Natural killer cell (primary cell): ENCODE measurements at regions of chr21 and their contacts with region 1.

Region 1: GRCh38 chr21:33199516-33200217 is 30.1 kb upstream of the IFNAR2 start:
- DNase-seq: peak; percentile 60 to 94
- ATAC-seq: peak; percentile 75 to 91 (median 83)
- H3K4me3 ChIP-seq: no peak overlapping the region
- H3K4me3 Mint-ChIP-seq: no peak overlapping the region
- H3K27ac ChIP-seq: no peak overlapping the region
- H3K27ac Mint-ChIP-seq: peak overlapping the region in 1 of 2 donors; percentile 60
- H3K4me1 ChIP-seq: peaks cover 30% of the 10 kb centered on the region
- H3K4me1 Mint-ChIP-seq: peaks cover 30 to 41% of the 10 kb centered on the region in 2 donors
- H3K27me3 ChIP-seq: peaks cover 2% of the 10 kb centered on the region
- H3K27me3 Mint-ChIP-seq: peaks cover 14 to 33% of the 10 kb centered on the region in 2 donors
- CTCF ChIP-seq: peak; percentile 68

Region 2: GRCh38 chr21:32578107-32578692 is 621.5 kb before region 1 on chr21:
- intact Hi-C with region 1: no loop called
- DNase-seq: peak in 1 of 2 donors; percentile 58
- ATAC-seq: peak in 1 of 3 donors; percentile 53
- H3K4me3 ChIP-seq: no peak overlapping the region
- H3K4me3 Mint-ChIP-seq: no peak overlapping the region
- H3K27ac ChIP-seq: no peak overlapping the region
- H3K27ac Mint-ChIP-seq: no peak overlapping the region
- H3K4me1 ChIP-seq: no peaks in the 10 kb centered on the region
- H3K4me1 Mint-ChIP-seq: no peaks in the 10 kb centered on the region
- H3K27me3 ChIP-seq: no peaks in the 10 kb centered on the region
- H3K27me3 Mint-ChIP-seq: no peaks in the 10 kb centered on the region
- CTCF ChIP-seq: no peak

Region 3: DNA sequence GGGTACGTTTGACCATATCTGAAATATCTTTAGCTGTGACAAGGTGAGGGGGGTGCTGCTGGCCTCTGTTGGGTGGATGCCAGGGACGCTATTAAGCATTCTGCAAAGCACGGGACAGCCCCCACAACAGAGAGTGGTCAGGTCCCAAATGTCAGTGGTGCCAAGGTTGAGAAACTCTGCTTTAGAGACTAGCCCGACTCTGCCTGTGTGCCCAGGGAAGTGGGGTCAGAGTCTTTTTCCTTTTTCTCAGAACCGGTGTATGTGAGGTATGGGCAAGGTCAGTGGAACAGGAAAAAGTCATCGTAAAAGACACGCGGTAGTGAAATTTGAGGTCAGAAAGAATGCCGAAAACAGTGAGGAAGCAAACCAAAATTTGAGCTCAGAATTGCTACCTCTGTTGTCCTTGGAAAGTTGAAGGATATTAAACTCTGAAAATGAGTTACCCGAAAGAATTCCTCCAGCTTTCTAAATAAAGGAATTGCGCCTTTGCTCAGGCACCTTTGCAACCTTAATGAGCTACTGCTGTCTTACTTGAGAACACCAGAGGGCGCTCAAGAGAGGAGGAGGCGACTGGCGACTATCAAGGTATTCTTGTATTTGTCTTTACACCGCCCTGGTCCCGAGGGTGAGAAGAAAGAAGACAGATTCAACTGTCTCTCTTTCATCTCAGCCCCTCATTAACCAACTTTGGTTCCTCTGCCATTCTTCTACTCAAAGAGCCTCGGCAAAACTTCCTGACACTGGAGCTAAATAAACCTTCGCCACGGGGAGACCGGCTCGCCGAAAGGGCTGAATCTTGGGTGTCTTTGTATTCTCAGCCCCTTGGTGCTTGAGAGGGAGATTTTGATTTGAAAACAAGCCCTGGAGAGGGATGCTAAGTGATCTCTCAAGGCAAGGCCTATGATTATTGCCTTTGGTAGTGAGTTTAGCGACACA is 259.3 kb before region 1 on chr21:
- intact Hi-C with region 1: loop called (anchors 5 kb)
- DNase-seq: peak in 1 of 2 donors; percentile 82
- ATAC-seq: peak; percentile 54 to 75 (median 74)
- H3K4me3 ChIP-seq: no peak overlapping the region
- H3K4me3 Mint-ChIP-seq: no peak overlapping the region
- H3K27ac ChIP-seq: no peak overlapping the region
- H3K27ac Mint-ChIP-seq: no peak overlapping the region
- H3K4me1 ChIP-seq: peaks cover 3% of the 10 kb centered on the region
- H3K4me1 Mint-ChIP-seq: peaks cover 15 to 17% of the 10 kb centered on the region in 2 donors
- H3K27me3 ChIP-seq: no peaks in the 10 kb centered on the region
- H3K27me3 Mint-ChIP-seq: peaks cover 4 to 5% of the 10 kb centered on the region in 2 donors
- CTCF ChIP-seq: peak; percentile 79

Region 4: DNA sequence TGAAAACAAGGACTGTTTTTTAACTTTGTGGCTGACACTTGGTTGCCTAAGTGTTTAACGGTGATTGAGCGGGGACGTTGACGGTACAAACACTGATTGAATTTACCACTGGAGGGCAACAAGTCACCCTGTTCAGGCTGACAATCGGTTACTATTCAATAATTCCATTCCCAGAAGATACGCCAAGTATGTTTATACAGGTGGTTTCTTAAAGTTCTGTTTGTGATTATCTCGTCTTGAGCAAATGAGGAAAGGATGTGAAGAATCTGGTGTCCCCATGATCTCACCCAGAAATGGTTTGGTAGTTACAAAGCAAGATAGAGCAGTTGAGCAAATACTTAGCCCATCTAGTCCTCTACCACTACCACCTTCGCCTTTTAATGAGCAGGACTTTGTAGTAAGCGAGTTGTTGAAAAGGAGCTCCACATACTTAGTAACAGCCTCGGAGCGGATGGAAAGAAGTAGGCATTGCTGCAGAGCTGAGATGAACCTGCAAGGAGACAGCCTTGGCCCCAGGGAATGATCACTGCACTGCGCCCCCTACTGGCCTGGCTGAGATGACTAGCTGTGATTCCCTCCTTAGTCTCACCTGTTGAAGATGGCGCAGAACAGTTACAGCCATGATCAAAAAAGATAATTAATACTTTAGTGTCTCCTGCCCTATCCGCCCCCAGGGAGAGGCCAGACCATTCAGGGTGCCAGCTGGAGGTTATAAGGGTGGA is 161.4 kb after region 1 on chr21:
- intact Hi-C with region 1: loop called (anchors 1 kb)
- DNase-seq: peak; percentile 74 to 93
- ATAC-seq: peak; percentile 72 to 83 (median 75)
- H3K4me3 ChIP-seq: peak overlapping the region; percentile 26
- H3K4me3 Mint-ChIP-seq: peak overlapping the region; percentile 82
- H3K27ac ChIP-seq: no peak overlapping the region
- H3K27ac Mint-ChIP-seq: peak overlapping the region; percentile 67 to 81
- H3K4me1 ChIP-seq: peaks cover 15% of the 10 kb centered on the region
- H3K4me1 Mint-ChIP-seq: peaks cover 15 to 18% of the 10 kb centered on the region in 2 donors
- H3K27me3 ChIP-seq: no peaks in the 10 kb centered on the region
- H3K27me3 Mint-ChIP-seq: peaks cover 12 to 15% of the 10 kb centered on the region in 2 donors
- CTCF ChIP-seq: peak; percentile 92

Region 5: DNA sequence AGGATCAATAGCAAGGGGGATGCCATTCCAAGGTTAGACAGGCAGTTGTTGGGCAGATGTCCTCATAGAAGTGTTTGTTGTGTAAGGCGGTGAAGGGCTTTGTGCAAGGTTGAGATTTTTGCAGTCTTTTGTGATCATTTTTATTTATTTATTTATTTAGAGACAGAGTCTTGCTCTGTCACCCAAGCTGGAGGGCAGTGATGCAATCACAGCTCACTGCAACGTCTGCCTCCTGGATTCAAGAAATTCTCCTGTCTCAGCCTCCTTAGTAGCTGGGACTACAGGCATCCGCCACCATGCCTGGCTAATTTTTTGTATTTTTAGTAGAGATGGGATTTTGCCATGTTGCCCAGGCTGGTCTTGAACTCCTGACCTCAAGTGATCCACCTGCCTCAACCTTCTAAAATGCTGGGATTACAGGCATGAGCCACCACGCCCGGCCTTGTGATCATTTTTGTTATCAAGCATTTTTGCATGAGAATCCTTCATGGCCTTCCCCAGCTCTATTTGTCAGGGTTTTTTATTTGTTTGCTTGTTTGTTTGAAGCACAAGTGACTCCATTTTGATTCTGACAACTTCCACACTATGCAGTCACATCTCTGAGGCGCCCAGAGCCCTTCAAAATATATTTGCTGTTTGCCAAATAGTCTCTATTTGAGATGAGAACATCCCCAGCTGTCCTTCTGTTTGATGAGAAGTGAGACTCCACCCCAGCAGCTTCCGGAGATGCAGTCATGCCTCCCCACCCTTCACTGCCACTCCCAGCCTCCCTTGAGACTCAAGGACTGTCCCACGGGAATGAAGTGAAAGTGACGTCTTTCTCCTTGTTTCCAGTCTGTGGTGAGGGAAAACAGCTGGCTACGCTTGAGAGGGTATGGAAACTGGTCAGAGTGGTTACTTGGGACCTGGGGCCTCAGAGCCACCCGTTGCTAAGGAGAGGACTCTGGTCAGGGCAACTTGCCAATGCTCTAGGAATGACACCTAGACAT is 242.1 kb after region 1 on chr21:
- intact Hi-C with region 1: loop called (anchors 1 kb)
- DNase-seq: no peak
- ATAC-seq: no peak
- H3K4me3 ChIP-seq: no peak overlapping the region
- H3K4me3 Mint-ChIP-seq: no peak overlapping the region
- H3K27ac ChIP-seq: peak overlapping the region; percentile 61
- H3K27ac Mint-ChIP-seq: no peak overlapping the region
- H3K4me1 ChIP-seq: peaks cover 10% of the 10 kb centered on the region
- H3K4me1 Mint-ChIP-seq: no peaks in the 10 kb centered on the region
- H3K27me3 ChIP-seq: no peaks in the 10 kb centered on the region
- H3K27me3 Mint-ChIP-seq: no peaks in the 10 kb centered on the region
- CTCF ChIP-seq: no peak